Cardiac septum (tissue), 1 donor: ENCODE measurements at regions of chr17 and their contacts with region 1.

Region 1: DNA sequence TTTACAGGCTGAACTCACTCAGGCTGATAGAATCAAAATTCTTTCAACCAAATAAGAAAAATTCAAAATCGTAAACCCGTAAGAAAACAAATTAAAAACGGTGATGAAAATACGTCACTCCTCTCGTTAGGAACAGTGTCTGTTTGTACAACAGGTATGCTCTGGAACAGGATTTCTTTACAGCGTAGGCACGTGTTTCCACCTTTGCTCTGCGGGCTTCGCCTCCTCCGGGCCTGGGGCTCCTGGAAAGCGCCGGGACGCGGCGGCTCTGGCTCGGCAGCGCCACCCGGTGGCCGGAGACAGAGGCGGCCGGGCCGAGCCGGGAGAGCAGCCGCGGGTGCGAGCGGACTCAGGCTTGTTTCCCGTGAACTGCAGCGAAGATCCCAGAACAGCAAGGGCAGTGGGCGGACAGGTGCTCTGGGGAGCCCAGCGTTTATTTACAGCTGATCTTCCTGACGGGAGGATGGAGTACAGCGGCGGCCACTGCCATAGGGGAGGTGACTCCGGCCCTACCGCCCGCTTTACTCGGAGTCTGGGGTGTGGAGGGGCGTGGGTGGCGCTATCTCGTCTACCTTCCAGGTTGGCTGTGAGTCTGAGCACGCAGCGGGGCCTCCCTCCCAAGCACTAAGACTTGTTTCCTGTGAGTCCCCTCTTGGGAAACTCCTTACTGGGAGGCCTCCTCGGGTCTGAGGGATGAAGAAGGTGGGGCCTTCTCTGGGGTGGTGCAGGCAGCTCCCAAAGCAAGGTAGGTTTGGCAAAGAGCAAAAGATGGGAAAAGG is 40.5 kb upstream of the ATP2A3 start:
- DNase-seq: peak; percentile 84

Region 2: DNA sequence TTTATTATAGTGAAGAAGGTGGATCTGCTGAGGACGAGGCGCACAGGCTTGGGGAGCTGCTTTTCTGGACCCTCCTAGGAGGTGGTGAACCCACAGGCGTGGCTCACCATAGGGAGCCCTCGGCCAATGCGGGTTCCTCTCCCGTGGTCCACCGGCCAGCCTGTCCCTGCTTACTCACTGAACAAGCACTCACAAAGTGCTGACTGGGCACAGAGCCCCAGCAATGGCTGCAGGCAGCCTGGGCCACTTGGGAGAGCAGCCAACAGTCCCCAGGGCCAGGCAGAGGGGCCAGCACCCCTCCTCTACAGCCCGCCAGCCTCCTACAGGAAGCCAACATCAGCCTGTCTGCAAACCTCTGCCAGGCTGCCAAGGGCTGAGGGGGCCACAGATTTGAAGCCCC is 139.5 kb before region 1 on chr17:
- intact Hi-C with region 1: loop called (anchors 1 kb)
- DNase-seq: no peak

Region 3: DNA sequence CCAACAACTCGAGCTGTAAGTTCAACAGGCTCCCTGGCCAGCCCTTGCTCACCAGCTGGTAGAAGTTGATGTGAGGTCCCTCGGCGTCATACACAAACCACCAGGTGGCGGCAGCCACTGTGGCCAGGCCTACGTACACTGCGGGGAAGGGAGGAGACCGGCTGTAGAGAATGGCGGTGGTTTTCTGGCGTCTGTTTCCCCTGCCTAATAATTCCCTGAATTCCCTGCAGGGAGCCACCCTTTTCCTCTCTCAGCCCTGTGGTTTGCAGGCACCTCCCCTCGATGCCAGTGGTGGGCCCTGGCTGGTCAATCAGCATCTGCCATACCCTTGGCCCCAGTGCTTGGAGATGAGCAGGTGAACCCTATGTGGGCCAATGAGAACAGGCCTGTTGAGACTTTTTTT is 69.6 kb before region 1 on chr17:
- intact Hi-C with region 1: loop called (anchors 1 kb)
- DNase-seq: peak; percentile 85